Psoas muscle (tissue), 8 donors: ENCODE measurements at regions of chr10 and their contacts with region 1.

Region 1: DNA sequence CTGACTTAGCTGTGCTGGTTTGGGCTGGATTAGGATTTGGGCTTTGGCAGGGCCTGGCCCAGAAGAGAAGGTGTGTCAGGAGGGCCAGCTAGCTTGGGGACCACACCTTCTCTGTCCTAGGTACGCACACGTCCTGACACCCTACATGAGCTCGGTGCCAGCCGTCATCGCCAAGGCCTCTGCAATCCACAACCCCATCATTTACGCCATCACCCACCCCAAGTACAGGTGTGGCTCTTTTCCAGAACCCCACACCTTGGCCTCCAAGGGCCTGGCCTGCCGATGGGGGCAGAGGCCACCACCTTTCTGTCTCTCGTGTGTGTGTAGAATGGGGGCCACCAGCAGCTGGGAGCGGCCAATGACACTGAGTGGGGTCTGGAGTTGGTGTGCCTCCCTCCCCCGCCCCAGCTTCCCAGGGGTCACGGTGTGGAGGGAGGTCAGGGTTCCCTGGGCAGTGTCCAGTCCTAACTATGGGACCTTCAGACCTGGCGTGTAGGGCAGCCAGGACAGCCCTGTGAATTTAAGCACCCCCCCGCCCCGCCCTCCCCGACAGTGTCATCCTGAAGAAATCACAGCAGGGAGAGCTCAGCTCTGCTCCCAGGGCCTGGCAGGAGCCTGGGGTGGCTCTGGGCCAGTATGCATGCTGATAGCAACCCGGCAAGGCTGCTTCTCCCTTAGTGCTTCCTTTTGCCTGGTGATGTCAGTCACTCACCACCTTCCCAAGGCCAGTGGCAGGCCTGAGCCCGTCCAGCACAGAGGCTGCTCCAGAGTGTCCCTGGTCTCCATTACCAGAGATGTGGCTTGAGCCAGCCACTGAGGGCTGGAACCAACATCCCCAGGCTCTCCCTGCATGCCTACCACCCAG is 6.9 kb upstream of the LDB3 start:
- DNase-seq: peak; percentile 84 to 96
- ATAC-seq: peak; percentile 77 to 86 (median 81)
- H3K4me3 ChIP-seq: no peak overlapping the region
- H3K27ac ChIP-seq: peak overlapping the region; percentile 92
- H3K4me1 ChIP-seq: peaks cover 50% of the 10 kb centered on the region
- H3K27me3 ChIP-seq: no peaks in the 10 kb centered on the region
- CTCF ChIP-seq: no peak

Region 2: DNA sequence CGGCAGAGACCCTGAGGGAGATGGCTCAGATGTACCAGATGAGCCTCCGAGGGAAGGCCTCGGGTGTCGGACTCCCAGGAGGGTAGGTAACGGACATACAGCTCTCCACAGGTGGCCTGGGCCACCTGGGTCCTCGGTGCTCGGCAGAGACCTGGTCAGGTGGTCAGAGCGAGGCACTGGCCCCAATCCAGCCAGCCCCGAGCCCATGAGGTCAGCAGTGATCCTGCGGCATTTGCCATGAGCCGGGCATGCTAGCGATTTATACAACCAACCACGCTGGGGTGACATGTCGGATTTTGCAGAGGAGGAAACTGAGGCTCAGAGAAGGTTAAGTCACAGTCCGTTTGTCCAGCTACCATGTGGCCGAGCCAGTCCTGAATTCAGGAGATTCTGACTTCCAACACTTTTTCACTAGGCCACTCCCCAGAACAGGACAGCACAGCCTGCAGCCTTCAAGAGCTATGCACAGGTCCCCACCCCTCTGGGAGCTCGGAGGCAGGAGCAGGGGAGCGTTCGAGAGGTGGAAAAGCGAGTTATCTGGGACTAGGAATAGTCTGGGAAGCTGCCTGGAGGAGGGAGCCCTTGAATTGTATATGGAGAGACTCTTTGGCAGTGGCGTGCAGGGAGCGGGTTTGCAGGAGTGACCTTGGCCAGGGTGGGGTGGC is 20.5 kb after region 1 on chr10:
- intact Hi-C with region 1: loop called in 1 of 2 experiments (anchors 1 kb)
- DNase-seq: no peak
- ATAC-seq: no peak
- H3K4me3 ChIP-seq: peak overlapping the region; percentile 7
- H3K27ac ChIP-seq: peak overlapping the region; percentile 92
- H3K4me1 ChIP-seq: peaks cover 97% of the 10 kb centered on the region
- H3K27me3 ChIP-seq: no peaks in the 10 kb centered on the region
- CTCF ChIP-seq: no peak